Tibial artery (tissue), 4 donors: ENCODE measurements at regions of chr4 and their contacts with region 1.

Region 1: DNA sequence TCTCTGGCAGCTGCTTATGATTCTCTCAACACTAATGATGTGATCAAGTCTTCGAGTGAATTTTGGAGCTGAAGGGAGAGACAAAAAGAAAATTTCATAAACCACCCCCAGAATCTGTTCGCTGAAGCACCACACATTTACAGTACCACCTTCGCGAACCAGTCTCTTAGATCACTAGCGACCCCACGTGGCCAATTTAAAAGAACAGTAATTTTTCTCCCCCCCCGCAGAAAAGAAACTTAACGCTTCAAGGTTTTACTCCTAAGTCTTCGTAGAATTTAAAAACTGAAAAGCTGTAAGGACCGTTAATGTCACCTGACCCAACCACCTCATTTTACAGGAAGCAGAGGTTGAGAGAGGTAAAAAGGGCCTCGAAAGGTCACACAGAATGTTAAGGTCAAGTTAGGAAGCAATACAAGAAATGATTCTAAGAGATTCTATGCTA is 187.5 kb downstream of the QDPR start:
- DNase-seq: no peak
- H3K4me3 ChIP-seq: no peak overlapping the region
- H3K27ac ChIP-seq: no peak overlapping the region
- H3K4me1 ChIP-seq: peaks cover 0 to 11% (median 10%) of the 10 kb centered on the region in 4 donors
- H3K27me3 ChIP-seq: no peaks in the 10 kb centered on the region
- CTCF ChIP-seq: peak; percentile 59 to 61

Region 2: GRCh38 chr4:16909281-16909680 is 415.1 kb before region 1 on chr4:
- intact Hi-C with region 1: loop called (anchors 10 kb)
- DNase-seq: no peak
- H3K4me3 ChIP-seq: no peak overlapping the region
- H3K27ac ChIP-seq: no peak overlapping the region
- H3K4me1 ChIP-seq: no peaks in the 10 kb centered on the region
- H3K27me3 ChIP-seq: no peaks in the 10 kb centered on the region
- CTCF ChIP-seq: no peak